ENCODE measurements at regions of chr3 and their contacts with region 1.

Region 1: GRCh38 chr3:69120879-69121464 is 1.4 kb downstream of the LMOD3 start:
- DNase-seq: peak in 1 of 2 donors; percentile 47
- ATAC-seq: peak; percentile 50 to 64 (median 60)
- H3K4me3 ChIP-seq: peak overlapping the region; percentile 65
- H3K27ac ChIP-seq: peak overlapping the region; percentile 98
- H3K4me1 ChIP-seq: peaks cover 32% of the 10 kb centered on the region
- H3K27me3 ChIP-seq: no peaks in the 10 kb centered on the region
- CTCF ChIP-seq: peak; percentile 94

Region 2: DNA sequence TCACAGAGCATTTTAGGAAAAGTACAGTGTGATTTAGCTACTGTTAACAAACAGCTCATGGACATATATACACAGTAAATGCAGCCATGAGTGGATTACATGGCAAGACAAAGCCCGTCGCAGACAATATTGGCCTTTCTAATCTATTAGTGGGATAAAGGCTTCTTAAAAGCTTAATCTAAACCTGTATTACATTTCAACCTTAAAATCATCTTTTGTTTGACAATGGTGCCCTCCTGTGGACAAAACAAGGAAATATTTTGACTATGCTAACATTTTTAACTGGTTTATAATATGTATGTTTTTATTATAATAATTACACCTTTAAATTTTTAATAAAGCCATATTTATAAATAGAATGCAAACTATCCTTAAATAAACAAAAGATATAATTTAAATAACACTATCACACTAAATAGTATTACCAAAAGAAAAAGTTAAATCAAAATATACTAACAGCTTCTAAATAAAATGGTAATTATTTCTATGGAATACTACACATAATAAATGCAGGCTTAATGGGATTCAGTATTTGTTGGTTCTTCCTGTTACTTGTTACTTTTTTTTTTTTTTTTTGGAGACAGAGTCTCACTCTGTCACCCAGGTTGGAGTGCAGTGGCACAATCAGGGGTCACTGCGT is 227.3 kb before region 1 on chr3:
- intact Hi-C with region 1: no loop called
- DNase-seq: no peak
- ATAC-seq: no peak
- H3K4me3 ChIP-seq: no peak overlapping the region
- H3K27ac ChIP-seq: no peak overlapping the region
- H3K4me1 ChIP-seq: no peaks in the 10 kb centered on the region
- H3K27me3 ChIP-seq: peaks cover 0 to 2% (median 0%) of the 10 kb centered on the region in 3 donors
- CTCF ChIP-seq: peak; percentile 60

Region 3: GRCh38 chr3:69084326-69085167 is 36.4 kb before region 1 on chr3 and contains the start of gene ARL6IP5:
- intact Hi-C with region 1: loop called (anchors 2 to 5 kb)
- DNase-seq: peak; percentile 93 to 97
- ATAC-seq: peak; percentile 52 to 68 (median 60)
- H3K4me3 ChIP-seq: peak within 1 kb of the TSS; percentile 90
- H3K27ac ChIP-seq: peak within 1 kb of the TSS; percentile 98
- H3K4me1 ChIP-seq: peaks cover 61% of the 10 kb centered on the region
- H3K27me3 ChIP-seq: no peaks in the 10 kb centered on the region
- CTCF ChIP-seq: no peak
- total RNA-seq, gene ARL6IP5: 121 to 191 (median 156) TPM

Region 4: GRCh38 chr3:69143605-69144004 is 22.6 kb after region 1 on chr3:
- intact Hi-C with region 1: loop called (anchors 2 kb)
- DNase-seq: no peak
- ATAC-seq: peak; percentile 92 to 96 (median 94)
- H3K4me3 ChIP-seq: peak overlapping the region; percentile 40
- H3K27ac ChIP-seq: peak overlapping the region; percentile 88
- H3K4me1 ChIP-seq: peaks cover 28% of the 10 kb centered on the region
- H3K27me3 ChIP-seq: no peaks in the 10 kb centered on the region
- CTCF ChIP-seq: no peak